ENCODE measurements at regions of chr19 and their contacts with region 1.

Region 1: DNA sequence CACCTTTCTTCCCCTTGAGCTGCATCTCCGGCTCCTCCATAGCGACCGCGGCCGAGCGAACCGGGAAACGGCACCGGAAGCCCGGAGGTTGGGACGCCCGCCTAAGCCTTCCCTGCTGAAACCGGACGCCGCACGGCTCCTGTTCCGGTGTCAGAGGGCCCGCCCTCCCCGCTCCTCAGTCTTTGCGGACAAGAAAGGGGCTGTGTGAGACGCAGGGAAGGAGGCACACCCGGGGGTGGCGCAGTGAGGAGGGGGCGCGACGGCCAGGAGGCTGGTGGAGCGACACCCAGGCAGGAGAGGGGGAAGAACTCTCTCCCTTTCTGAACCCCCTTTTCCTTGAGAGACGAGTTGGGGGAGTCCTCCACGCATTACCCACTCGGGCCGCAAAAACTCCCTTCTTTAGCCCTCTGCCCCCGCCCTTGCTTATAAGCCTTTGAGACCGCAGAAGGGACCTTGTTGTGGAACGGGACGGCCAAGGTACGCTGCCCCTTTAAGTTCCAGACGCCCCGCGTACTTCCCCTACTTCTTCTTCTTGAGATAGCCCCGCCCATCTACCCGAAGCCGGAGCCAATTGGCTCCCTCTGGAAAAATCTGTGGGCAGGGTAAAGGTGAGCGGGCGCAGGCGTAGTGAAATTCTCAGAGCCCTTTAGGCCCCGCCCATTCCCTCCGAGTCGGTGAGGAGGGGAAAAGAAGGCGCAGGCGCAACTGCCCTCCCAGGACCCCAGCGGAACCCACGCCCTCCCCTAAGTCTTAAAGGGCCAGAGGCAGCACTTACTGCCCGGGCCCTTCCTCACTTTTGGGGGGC is at the starts of genes BORCS8 and RFXANK:
- DNase-seq: peak; percentile 82 to 96
- ATAC-seq: peak; percentile 94 to 97
- H3K4me3 ChIP-seq: peak within 1 kb of the TSS; percentile 82
- H3K27ac ChIP-seq: peak within 1 kb of the TSS; percentile 96 to 98
- H3K4me1 ChIP-seq: peaks cover 18% of the 10 kb centered on the region; the same call in 2 of the 3 replicates
- CTCF ChIP-seq: no peak
- EP300 ChIP-seq: no peak
- POLR2A ChIP-seq: peak; percentile 44
- RAD21 ChIP-seq: no peak
- polyA plus RNA-seq, gene BORCS8: 7.2 and 9.1 TPM in 2 replicates
- polyA plus RNA-seq, gene RFXANK: 23.4 and 24.3 TPM in 2 replicates

Region 2: DNA sequence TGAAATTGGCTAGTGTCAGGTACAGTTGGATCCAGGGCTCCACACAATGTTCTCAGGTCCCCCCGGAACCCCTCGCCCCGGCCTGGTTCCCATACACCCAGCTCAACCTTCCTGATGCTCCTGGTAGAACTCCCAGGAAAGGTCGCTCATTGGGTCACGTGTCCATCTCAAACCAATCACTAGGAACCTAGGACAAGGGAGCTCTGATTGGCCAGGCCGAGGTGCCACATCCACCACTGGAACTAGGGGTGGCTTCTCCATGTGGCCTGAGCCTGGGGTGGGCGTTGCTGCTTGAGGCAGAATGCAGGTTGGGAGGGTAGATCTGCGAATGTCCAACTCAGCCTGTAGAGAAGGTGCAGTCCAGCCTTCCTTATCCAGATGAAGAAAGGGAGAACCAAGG is 15.3 kb before region 1 on chr19:
- CTCF ChIA-PET with region 1: interaction called, 22 read pairs
- POLR2A ChIA-PET with region 1: no interaction called
- DNase-seq: peak in 1 of 2 experiments; percentile 36
- ATAC-seq: no peak; a peak in 1 of 6 replicates
- H3K4me3 ChIP-seq: no peak overlapping the region
- H3K27ac ChIP-seq: no peak overlapping the region
- H3K4me1 ChIP-seq: peaks cover 4% of the 10 kb centered on the region; the same call in 1 of the 3 replicates
- CTCF ChIP-seq: no peak
- EP300 ChIP-seq: no peak
- POLR2A ChIP-seq: no peak
- RAD21 ChIP-seq: no peak

Region 3: DNA sequence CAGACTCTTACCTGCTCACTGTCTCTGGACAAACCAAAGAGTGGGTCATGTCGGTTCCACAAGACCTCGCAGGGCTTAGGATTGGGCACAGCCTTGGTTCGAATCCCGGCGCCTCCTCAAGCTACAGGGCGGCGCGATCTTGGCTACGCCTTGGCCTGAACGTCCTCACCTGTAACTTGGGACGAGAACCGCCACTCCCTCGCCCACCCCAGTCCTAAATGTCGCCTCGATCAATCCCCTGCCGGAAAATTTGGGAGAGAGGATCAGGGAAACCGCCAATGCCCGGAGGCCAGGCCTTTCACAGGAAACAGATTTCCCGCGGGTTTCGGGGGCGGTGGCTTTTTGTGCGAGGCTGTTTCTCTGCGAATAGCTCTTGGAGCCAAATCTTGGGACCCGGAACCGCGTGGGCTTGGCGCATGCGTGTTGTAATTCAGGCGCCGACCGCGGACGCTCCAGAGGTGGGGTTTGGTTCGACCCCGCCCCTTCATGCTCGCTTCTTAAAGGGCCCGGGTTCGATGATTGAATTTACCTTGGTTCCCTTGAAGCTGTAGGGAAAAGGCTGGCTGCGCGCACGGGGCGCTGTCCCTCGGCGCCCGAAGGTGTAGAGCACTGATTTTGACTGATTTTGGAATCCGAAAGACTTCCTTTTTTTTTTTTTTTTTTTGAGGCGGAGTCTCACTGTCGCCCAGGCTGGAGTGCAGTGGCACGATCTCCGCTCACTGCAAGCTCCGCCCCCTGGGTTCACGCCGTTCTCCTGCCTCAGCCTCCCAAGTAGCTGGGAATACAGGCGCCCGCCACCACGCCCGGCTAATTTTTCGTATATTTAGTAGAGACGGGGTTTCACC is 11.0 kb after region 1 on chr19 and contains the start of gene NR2C2AP:
- CTCF ChIA-PET with region 1: interaction called, 3 read pairs
- POLR2A ChIA-PET with region 1: interaction called, 19 read pairs
- DNase-seq: peak; percentile 91 to 92
- ATAC-seq: peak; percentile 80 to 91
- H3K4me3 ChIP-seq: peak within 1 kb of the TSS; percentile 84
- H3K27ac ChIP-seq: peak within 1 kb of the TSS; percentile 88
- H3K4me1 ChIP-seq: 0 out of 3 replicates have a peak, but pooled peaks cover 7% of the 10 kb centered on the region
- CTCF ChIP-seq: no peak
- EP300 ChIP-seq: no peak
- POLR2A ChIP-seq: peak; percentile 13; the same call in 1 of the 2 replicates
- RAD21 ChIP-seq: no peak
- polyA plus RNA-seq, gene NR2C2AP: 19.3 and 20.0 TPM in 2 replicates